B cell (primary cell): ENCODE measurements at regions of chr15 and their contacts with region 1.

Region 1: DNA sequence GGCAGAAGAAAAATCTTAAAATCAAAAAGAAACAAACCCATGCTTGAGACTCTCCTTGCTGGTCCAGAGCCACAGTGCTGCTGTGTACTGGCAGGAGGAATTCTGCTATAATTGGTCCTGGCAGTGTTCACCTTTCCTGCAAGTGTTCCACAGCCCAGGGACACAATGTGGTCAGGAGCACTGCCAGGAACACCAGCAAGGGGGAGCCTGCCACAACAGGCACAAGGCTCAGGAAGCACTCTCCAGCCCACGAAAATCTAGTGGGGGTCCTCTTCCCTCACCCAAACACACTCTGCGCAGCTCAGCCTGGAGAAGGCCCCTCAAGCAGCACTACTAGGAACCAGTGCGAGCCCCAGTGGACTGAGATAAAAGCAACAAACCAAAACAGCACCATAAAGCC is 92.9 kb downstream of the UBE3A start:
- DNase-seq: no peak
- ATAC-seq: no peak
- H3K4me3 ChIP-seq: no peak overlapping the region
- H3K4me3 Mint-ChIP-seq: no peak overlapping the region
- H3K27ac ChIP-seq: no peak overlapping the region
- H3K27ac Mint-ChIP-seq: no peak overlapping the region
- H3K4me1 ChIP-seq: no peaks in the 10 kb centered on the region
- H3K4me1 Mint-ChIP-seq: peaks cover 10% of the 10 kb centered on the region
- H3K27me3 ChIP-seq: no peaks in the 10 kb centered on the region
- H3K27me3 Mint-ChIP-seq: no peaks in the 10 kb centered on the region
- CTCF ChIP-seq: no peak

Region 2: DNA sequence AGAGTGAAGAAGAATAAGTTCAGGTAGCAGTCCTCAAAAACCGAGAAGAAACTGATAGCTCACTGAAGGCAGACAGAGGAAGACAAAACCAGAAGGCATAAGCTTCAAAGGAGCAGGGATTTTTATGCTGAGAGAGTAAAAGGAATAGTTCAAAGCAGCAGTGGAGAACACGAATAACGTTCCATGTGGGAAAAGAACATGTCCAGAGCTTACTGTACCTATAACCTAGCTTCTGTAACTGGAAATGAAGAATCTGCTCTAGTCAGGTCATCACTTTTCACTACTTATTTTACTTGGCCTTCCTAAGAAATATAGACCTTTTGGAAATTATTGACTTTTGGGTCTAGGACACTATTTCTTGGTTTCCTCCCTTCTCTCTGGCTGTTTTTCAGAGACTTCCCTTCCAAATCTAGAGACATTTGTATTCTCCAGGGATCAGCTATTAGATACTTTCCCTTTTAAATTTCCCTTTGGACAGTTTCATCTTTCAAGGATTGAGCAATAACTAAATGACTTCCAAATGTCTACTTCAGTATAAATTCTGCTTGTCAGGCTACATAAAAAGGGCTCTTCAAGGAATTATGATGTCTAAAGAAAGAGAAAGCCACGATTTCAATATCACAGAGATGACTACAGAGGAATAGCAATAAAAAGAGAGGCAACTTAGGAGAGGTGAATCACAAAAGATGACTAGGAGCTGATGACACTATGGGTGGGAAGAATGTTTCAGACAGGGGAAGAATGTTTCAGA is 46.2 kb after region 1 on chr15:
- CTCF ChIA-PET with region 1: no interaction called
- POLR2A ChIA-PET with region 1: no interaction called
- intact Hi-C with region 1: loop called (anchors 10 kb)
- DNase-seq: no peak
- ATAC-seq: no peak
- H3K4me3 ChIP-seq: no peak overlapping the region
- H3K4me3 Mint-ChIP-seq: no peak overlapping the region
- H3K27ac ChIP-seq: no peak overlapping the region
- H3K27ac Mint-ChIP-seq: no peak overlapping the region
- H3K4me1 ChIP-seq: no peaks in the 10 kb centered on the region
- H3K4me1 Mint-ChIP-seq: peaks cover 5% of the 10 kb centered on the region
- H3K27me3 ChIP-seq: no peaks in the 10 kb centered on the region
- H3K27me3 Mint-ChIP-seq: no peaks in the 10 kb centered on the region
- CTCF ChIP-seq: no peak